GM10248 (cell line): ENCODE measurements at regions of chr2 and their contacts with region 1.

Region 1: DNA sequence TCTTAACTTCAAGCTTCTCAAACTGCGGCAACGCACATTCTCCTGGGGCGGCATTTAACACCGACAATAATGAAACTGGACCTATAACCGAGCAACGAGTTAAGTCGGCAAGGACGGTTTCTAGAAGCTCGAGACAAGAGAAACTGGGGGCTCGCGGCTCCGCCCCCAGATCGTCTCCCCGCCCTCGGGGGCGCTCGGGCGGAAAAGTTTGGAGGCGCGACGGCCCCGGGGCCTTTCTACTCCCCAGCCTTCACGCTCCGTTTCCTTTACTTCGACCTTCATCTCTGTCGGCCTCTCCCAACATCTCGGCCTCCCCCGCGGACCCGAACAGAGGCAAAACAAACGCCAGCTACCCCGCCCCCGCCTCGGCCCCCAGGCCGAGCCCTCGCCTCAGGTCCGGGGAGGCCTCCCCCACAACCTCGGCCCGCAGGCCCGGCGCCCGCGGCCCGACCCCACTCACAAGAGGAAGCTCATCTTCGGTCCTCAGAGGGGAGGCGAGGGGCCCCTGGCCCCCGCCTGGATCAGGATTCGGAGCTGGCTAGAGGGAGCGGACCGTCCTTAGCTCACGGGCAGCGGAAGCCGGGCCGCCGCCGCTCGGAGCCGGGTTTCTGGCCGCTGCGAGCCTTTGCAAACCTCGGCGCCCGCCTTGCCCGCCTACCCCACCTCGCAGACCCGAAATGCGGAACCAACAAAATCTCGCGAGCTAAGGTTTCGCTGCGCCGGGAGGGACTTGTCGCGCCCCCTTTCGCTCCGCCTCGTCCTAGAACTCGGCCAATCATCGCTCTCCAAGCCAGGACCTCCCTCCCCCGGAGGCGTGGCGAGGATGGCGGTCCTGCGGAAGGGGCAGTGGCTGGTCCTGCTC is at the start of gene MOB1A:
- DNase-seq: peak; percentile 94
- CTCF ChIP-seq: no peak

Region 2: GRCh38 chr2:74147727-74148456 is 30.5 kb before region 1 on chr2 and contains the start of gene BOLA3:
- CTCF ChIA-PET with region 1: interaction called, 31 read pairs
- POLR2A ChIA-PET with region 1: interaction called, 6 read pairs
- DNase-seq: peak; percentile 97
- CTCF ChIP-seq: peak; percentile 81

Region 3: DNA sequence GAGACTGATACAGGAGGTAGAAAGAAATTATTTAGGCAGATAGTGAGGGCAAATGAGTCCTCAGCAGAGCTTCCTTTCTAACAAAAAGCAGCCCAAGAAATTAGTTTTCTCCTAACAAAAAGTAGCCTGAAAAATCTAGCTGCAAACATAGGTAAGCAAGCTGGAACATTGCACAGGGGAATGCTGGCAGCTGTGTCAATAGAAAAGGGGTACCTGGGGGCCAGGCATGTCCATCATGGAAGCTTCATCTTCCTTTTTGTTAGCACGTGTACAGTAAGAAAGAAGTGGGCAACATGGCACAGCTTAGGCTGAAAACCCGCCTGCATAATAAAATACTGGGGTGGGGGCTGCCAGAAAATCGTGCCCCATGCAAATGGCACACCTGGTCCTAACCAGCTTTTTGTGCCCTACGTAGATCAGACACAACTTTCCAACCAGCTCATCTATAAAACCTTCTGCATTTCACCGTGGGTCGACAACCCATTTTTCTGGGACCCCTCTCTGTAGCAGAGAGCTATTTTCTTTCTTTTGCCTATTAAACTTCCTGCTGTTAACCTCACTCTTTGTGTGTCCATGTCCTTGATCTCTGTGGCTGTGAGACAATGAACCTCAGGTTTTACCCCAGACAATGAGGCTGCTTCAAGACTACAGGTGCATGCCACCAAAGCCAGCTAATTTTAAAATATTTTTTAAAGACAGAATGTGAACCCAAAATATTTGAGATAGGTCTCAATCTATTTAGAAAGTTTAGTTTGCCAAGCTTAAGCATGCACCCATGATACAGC is 13.4 kb after region 1 on chr2:
- CTCF ChIA-PET with region 1: interaction called, 75 read pairs
- POLR2A ChIA-PET with region 1: interaction called, 5 read pairs
- DNase-seq: no peak
- CTCF ChIP-seq: no peak

Region 4: DNA sequence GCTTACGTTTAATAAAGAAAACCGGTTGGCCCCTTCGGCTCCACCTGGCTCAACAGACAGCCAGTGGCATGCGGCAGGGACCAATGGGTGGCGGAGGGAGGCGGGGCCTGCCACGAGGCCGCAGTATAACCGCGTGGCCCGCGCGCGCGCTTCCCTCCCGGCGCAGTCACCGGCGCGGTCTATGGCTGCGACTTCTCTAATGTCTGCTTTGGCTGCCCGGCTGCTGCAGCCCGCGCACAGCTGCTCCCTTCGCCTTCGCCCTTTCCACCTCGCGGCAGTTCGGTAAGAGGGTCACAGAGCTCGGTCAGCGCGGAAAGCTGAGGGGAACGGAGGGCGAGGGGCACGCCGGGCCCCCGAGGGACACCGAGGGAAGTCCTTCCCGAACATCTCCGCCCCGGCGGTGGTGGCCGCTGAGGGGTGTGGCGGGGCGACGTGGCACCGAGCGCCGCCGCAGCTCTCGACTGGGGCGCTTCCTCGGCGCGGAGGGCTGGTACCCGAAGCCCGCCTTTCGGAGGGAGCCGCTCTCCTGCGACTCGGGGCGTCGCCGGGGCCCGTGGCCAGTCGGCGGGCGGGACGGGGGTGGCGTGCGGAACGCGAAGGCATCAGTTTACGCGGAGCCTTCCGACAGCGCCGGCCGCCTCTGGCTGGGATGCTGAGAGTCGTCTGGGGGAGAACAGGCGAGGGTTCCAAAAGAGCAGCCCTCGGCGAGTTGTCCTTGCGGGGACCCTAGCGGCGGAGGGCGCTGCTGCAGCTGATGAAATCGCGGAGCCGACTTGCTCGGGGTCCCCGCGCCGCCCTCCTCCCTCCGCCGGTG is 20.2 kb after region 1 on chr2 and contains the start of gene MTHFD2:
- CTCF ChIA-PET with region 1: interaction called, 75 read pairs
- POLR2A ChIA-PET with region 1: interaction called, 26 read pairs
- DNase-seq: peak; percentile 95
- CTCF ChIP-seq: peak; percentile 78